ENCODE measurements at regions of chr6 and their contacts with region 1.

Region 1: DNA sequence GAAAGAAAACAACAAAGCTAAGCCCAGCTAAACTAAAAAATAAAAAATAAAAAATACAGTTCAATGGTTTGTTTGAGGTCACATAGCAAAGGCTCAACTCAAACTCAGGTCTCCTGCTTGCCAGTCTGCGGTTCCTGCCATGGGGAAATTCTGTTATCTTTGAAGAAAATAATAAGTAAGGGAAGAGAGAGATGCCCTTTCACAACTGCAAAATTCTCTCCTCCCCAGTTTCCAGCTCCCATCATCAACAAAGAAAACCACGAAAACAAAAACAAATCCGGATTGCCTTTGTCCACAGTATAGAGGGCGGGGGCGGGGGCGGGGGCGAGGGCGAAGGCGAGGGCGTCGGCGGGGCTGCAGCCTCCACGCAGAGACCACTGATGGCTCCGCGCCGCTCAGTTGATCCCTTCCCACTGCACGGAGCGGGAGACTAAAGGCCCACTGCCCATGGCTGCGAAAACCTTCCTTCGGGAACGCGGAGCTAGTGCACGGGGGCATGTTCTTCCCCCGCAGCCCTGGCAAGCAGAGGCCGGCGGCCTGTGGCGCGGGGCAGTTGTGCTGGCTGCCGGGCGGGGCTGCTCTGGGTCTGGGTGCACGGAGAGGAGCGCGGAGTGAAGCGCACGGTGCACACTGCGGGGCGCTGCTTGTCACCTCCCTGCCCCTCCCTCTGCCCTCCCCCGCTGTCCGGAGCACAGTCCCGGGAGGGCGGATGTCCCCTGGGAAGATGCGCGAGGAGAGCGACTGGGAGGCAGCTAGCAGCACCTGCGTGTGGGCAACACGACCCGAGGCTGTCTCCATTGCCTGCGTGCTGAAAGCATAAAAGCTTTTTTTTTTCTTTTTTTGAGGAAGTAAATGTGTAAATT is 54.1 kb upstream of the TPD52L1 start:
- DNase-seq: peak; percentile 82
- ATAC-seq: peak; percentile 95

Region 2: GRCh38 chr6:124961777-124962611 is 137.4 kb before region 1 on chr6 and contains the start of gene RNF217:
- intact Hi-C with region 1: loop called (anchors 1 kb)
- DNase-seq: peak; percentile 85
- ATAC-seq: peak; percentile 77
- total RNA-seq, gene RNF217: 8.0 TPM

Region 3: DNA sequence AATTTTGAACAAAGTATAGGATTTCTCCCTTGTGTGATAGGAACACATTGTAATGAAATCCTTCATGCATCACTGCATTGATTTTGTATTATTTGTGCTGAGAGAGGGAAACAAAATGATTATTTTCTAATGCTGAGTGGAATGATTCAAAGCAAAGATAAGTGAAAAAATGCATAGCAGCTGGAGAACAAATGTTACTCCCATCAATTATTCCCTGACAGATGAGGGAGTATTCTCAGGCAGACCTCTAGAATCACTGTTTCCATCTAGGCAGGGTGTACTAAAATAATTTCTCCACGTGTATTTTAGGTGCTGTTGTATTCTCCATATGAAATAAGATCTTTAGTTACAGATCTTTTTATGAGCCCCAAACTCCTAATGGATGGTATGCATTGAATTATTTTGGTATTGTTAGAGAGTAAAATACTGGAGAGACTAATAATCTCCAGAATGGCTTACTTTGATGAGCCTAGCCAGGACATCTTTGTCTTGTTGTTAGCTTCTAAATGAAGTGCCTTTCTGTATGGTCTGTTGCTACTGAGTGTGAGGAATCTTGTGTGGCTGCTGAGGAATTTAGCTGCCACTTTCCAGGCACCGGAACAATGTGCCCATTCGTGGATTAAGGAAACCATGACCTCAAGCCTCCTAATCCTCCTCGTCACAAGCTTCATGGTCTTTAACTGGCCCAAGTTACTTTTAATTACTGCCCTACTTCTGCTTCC is 97.6 kb before region 1 on chr6:
- intact Hi-C with region 1: loop called (anchors 10 kb)
- DNase-seq: no peak
- ATAC-seq: no peak

Region 4: GRCh38 chr6:125170376-125170775 is 70.9 kb after region 1 on chr6:
- intact Hi-C with region 1: no loop called
- DNase-seq: no peak
- ATAC-seq: peak; percentile 73